CD4-positive, alpha-beta T cell (primary cell): ENCODE measurements at regions of chr5 and their contacts with region 1.

Region 1: GRCh38 chr5:149345147-149345875 is at the start of gene GRPEL2:
- DNase-seq: peak; percentile 68 to 94 (median 82)
- ATAC-seq: peak; percentile 59
- H3K4me3 ChIP-seq: peak within 1 kb of the TSS; percentile 75
- H3K4me3 Mint-ChIP-seq: peak within 1 kb of the TSS; percentile 92
- H3K27ac ChIP-seq: peak within 1 kb of the TSS; percentile 76 to 85
- H3K27ac Mint-ChIP-seq: peak within 1 kb of the TSS; percentile 85
- H3K4me1 ChIP-seq: peaks cover 59% of the 10 kb centered on the region
- H3K4me1 Mint-ChIP-seq: peaks cover 59% of the 10 kb centered on the region
- H3K27me3 ChIP-seq: no peaks in the 10 kb centered on the region
- H3K27me3 Mint-ChIP-seq: no peaks in the 10 kb centered on the region
- CTCF ChIP-seq: no peak
- total RNA-seq, gene GRPEL2: 20.8 to 22.5 TPM

Region 2: DNA sequence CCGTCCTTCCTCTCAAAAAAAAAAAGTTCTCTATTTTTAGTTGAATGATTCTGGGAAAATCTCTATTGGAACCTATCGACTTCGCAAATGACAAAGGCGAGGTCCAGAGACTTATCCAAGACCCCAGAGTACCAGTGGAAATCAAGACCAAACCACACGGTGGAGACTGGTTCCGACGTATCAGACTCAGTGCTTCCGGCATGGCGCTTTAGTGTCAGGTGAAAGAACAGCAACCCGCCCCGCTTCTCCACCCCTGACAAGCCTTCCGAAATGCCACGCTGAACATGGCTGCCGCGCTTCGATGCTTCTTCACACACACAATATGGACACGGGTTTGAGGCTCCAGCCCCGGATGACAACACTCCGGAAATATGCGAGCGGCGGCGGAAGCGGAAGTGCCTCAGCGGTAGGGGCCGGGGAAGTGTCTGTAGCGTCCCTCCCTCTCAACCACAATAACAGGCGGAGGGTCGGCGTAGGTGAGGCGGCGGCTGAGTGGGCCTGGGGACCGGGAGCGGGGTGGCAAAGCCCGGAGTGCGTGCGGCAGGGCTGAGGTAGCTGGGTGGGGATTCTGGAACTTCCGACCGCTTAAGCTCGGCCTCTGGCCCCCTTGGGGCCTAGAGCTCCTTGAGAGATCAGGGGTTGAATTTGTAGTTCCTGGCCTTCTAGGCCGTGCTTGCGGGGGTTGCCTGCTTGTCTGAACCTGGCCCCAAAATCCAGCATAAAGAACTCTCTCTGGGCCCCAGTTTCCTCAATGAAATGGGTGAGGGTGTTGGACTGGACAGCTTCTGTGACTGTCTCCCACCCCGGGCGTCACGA is 961.5 kb before region 1 on chr5 and contains the start of gene FBXO38:
- CTCF ChIA-PET with region 1: no interaction called
- POLR2A ChIA-PET with region 1: no interaction called
- intact Hi-C with region 1: loop called in 1 of 2 experiments (anchors 10 kb)
- DNase-seq: peak; percentile 93 to 99 (median 97)
- ATAC-seq: peak; percentile 94
- H3K4me3 ChIP-seq: peak within 1 kb of the TSS; percentile 84
- H3K4me3 Mint-ChIP-seq: peak within 1 kb of the TSS; percentile 89
- H3K27ac ChIP-seq: peak within 1 kb of the TSS; percentile 92 to 96
- H3K27ac Mint-ChIP-seq: peak within 1 kb of the TSS; percentile 96
- H3K4me1 ChIP-seq: peaks cover 25% of the 10 kb centered on the region
- H3K4me1 Mint-ChIP-seq: peaks cover 71% of the 10 kb centered on the region
- H3K27me3 ChIP-seq: no peaks in the 10 kb centered on the region
- H3K27me3 Mint-ChIP-seq: no peaks in the 10 kb centered on the region
- CTCF ChIP-seq: no peak
- total RNA-seq, gene FBXO38: 45.7 to 47.3 TPM

Region 3: GRCh38 chr5:149298842-149299404 is 46.4 kb before region 1 on chr5:
- CTCF ChIA-PET with region 1: no interaction called
- POLR2A ChIA-PET with region 1: interaction called, 10 read pairs
- intact Hi-C with region 1: no loop called
- DNase-seq: no peak
- ATAC-seq: no peak
- H3K4me3 ChIP-seq: no peak overlapping the region
- H3K4me3 Mint-ChIP-seq: peak overlapping the region; percentile 23
- H3K27ac ChIP-seq: no peak overlapping the region
- H3K27ac Mint-ChIP-seq: peak overlapping the region; percentile 89
- H3K4me1 ChIP-seq: peaks cover 44% of the 10 kb centered on the region
- H3K4me1 Mint-ChIP-seq: peaks cover 65% of the 10 kb centered on the region
- H3K27me3 ChIP-seq: peaks cover 0 to 3% of the 10 kb centered on the region in 2 experiments
- H3K27me3 Mint-ChIP-seq: peaks cover 7% of the 10 kb centered on the region
- CTCF ChIP-seq: no peak

Region 4: GRCh38 chr5:149333711-149334443 is 11.4 kb before region 1 on chr5:
- CTCF ChIA-PET with region 1: no interaction called
- POLR2A ChIA-PET with region 1: interaction called, 11 read pairs
- intact Hi-C with region 1: no loop called
- DNase-seq: no peak
- ATAC-seq: no peak
- H3K4me3 ChIP-seq: no peak overlapping the region
- H3K4me3 Mint-ChIP-seq: no peak overlapping the region
- H3K27ac ChIP-seq: no peak overlapping the region
- H3K27ac Mint-ChIP-seq: no peak overlapping the region
- H3K4me1 ChIP-seq: no peaks in the 10 kb centered on the region
- H3K4me1 Mint-ChIP-seq: no peaks in the 10 kb centered on the region
- H3K27me3 ChIP-seq: no peaks in the 10 kb centered on the region
- H3K27me3 Mint-ChIP-seq: no peaks in the 10 kb centered on the region
- CTCF ChIP-seq: no peak

Region 5: GRCh38 chr5:149367249-149367971 is 22.1 kb after region 1 on chr5:
- CTCF ChIA-PET with region 1: interaction called, 16 read pairs
- POLR2A ChIA-PET with region 1: interaction called, 22 read pairs
- intact Hi-C with region 1: no loop called
- DNase-seq: peak; percentile 30 to 77 (median 50)
- ATAC-seq: peak; percentile 69
- H3K4me3 ChIP-seq: no peak overlapping the region
- H3K4me3 Mint-ChIP-seq: no peak overlapping the region
- H3K27ac ChIP-seq: no peak overlapping the region
- H3K27ac Mint-ChIP-seq: peak overlapping the region; percentile 24
- H3K4me1 ChIP-seq: peaks cover 23% of the 10 kb centered on the region
- H3K4me1 Mint-ChIP-seq: peaks cover 35% of the 10 kb centered on the region
- H3K27me3 ChIP-seq: peaks cover 0 to 3% of the 10 kb centered on the region in 2 experiments
- H3K27me3 Mint-ChIP-seq: no peaks in the 10 kb centered on the region
- CTCF ChIP-seq: peak; percentile 80

Region 6: GRCh38 chr5:150357326-150358260 is 1012.3 kb after region 1 on chr5 and contains the start of gene TCOF1:
- CTCF ChIA-PET with region 1: no interaction called
- POLR2A ChIA-PET with region 1: no interaction called
- intact Hi-C with region 1: loop called in 1 of 2 experiments (anchors 10 kb)
- DNase-seq: peak; percentile 93 to 98 (median 97)
- ATAC-seq: peak; percentile 98
- H3K4me3 ChIP-seq: peak within 1 kb of the TSS; percentile 86
- H3K4me3 Mint-ChIP-seq: peak within 1 kb of the TSS; percentile 89
- H3K27ac ChIP-seq: peak within 1 kb of the TSS in 1 of 2 donors; percentile 46
- H3K27ac Mint-ChIP-seq: peak within 1 kb of the TSS; percentile 73
- H3K4me1 ChIP-seq: peaks cover 28% of the 10 kb centered on the region
- H3K4me1 Mint-ChIP-seq: peaks cover 47% of the 10 kb centered on the region
- H3K27me3 ChIP-seq: no peaks in the 10 kb centered on the region
- H3K27me3 Mint-ChIP-seq: no peaks in the 10 kb centered on the region
- CTCF ChIP-seq: no peak
- total RNA-seq, gene TCOF1: 40.4 to 43.2 TPM